ENCODE measurements at regions of chr1 and their contacts with region 1.

Region 1: DNA sequence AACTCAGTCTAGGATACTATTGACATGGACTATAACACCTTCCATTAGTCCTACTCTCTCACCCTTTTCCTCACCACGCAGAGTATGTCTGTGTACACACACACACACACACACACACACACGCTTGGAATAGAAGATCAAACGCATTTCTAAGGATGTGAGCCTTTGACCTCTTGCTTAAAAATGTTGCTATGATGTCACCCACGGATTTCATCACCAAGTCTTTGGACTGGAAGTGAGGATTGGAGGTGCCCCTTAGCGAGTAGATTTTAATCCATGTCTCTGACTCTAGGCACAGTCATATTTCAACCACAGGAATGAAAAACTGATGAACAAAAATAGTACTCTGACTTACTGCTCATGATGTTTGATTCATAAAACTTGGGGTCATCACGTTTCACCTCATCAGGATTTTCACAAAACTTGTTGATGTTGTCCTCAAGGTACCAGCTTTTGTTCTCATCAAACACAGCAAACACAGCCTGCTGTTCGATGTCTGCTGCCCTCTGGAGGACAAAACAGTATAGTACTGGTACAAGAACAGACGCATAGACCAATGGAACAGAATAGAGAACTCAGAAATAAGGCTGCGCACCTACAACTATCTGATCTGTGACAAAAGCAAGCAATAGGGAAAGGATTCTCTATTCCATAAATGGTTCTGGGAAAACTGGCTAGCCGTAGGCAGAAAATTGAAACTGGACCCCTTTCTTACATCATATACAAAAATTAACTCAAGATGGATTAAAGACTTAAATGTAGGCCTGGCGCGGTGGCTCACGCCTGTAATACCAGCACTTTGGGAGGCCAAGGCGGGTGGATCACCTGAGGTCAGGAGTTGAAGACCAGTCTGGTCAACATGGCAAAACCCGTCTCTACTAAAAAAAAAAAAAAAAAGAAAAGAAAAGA is 39.9 kb downstream of the F5 start:
- DNase-seq: peak; percentile 77
- ATAC-seq: peak; percentile 93
- H3K4me3 Mint-ChIP-seq: no peak overlapping the region
- H3K27ac Mint-ChIP-seq: no peak overlapping the region
- H3K4me1 Mint-ChIP-seq: no peaks in the 10 kb centered on the region
- H3K27me3 Mint-ChIP-seq: no peaks in the 10 kb centered on the region

Region 2: DNA sequence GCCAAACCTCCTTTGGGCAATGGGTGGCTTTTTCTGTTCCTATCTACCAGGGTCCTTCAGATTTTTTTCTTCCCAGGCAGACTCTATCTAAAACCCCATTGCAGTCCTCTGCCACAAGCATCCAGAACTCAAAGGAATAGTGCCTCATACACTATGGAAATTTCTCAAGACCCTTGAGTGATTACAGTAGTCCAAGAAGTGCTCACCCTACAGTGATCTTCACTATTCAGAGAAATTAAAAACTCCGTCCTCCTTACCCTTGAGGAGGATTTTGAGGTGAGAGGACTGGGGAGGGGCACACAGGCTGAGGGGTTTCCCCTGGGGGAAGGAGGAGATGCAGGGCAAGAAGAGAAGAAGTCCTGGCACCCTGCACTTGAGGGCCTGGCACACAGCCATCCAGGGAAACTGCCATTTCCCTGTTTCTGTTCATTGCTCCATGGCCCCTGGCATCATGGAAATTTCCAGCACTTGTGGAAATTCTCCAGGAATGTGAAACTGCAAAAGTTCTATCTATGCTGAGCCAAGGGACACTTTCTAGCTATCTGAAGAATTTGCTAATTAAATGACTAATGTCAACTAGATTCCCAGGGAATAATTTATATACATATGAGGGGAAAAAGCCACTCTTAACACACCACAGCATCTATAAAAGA is 542.4 kb before region 1 on chr1:
- CTCF ChIA-PET with region 1: no interaction called
- POLR2A ChIA-PET with region 1: no interaction called
- DNase-seq: no peak
- ATAC-seq: no peak
- H3K4me3 Mint-ChIP-seq: no peak overlapping the region
- H3K27ac Mint-ChIP-seq: no peak overlapping the region
- H3K4me1 Mint-ChIP-seq: no peaks in the 10 kb centered on the region
- H3K27me3 Mint-ChIP-seq: peaks cover 3% of the 10 kb centered on the region

Region 3: GRCh38 chr1:169466259-169467230 is 79.8 kb before region 1 on chr1:
- CTCF ChIA-PET with region 1: interaction called, 15 read pairs
- POLR2A ChIA-PET with region 1: no interaction called
- DNase-seq: peak; percentile 48
- ATAC-seq: no peak
- H3K4me3 Mint-ChIP-seq: no peak overlapping the region
- H3K27ac Mint-ChIP-seq: no peak overlapping the region
- H3K4me1 Mint-ChIP-seq: peaks cover 3% of the 10 kb centered on the region
- H3K27me3 Mint-ChIP-seq: no peaks in the 10 kb centered on the region

Region 4: DNA sequence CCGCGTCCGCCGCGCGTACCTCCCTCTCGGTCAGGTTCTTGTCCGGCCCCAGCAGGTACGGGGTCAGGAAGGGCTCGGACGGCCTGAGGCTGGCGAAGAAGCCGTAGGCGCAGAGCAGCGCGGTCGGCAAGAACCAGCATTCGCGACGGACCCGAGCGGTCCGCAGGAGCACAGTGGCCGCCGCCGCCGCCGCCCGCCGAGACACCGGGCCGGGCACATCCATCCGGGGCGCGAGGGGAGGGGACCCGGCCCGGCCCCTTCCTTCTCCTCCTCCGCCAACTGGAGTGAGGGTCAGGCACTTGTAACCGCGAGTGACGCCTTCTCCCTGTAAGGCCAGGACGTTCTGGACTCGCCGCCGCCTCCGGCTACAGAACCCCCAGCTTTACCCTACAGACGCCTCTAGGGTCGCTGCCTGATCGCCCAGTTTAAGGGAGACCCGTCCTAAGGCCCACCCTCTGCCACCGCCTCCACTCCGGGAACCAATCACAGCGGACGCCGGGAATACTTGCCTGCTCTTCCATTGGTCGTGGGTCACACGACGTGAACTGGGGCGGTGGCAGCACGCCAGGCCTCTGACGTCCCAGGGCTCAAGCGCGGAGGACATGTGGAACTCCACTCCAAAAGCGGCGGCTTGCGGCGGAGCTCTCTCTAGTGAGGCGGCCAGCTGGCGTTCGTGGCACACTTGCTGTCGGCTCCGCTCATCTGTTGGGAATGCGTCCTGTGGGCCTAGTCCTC is 60.6 kb before region 1 on chr1 and contains the start of gene SLC19A2:
- CTCF ChIA-PET with region 1: interaction called, 10 read pairs
- POLR2A ChIA-PET with region 1: no interaction called
- DNase-seq: peak; percentile 96
- ATAC-seq: peak; percentile 99
- H3K4me3 Mint-ChIP-seq: peak within 1 kb of the TSS; percentile 82
- H3K27ac Mint-ChIP-seq: peak within 1 kb of the TSS; percentile 89
- H3K4me1 Mint-ChIP-seq: peaks cover 38% of the 10 kb centered on the region
- H3K27me3 Mint-ChIP-seq: no peaks in the 10 kb centered on the region
- total RNA-seq, gene SLC19A2: 4.8 to 5.8 TPM

Region 5: DNA sequence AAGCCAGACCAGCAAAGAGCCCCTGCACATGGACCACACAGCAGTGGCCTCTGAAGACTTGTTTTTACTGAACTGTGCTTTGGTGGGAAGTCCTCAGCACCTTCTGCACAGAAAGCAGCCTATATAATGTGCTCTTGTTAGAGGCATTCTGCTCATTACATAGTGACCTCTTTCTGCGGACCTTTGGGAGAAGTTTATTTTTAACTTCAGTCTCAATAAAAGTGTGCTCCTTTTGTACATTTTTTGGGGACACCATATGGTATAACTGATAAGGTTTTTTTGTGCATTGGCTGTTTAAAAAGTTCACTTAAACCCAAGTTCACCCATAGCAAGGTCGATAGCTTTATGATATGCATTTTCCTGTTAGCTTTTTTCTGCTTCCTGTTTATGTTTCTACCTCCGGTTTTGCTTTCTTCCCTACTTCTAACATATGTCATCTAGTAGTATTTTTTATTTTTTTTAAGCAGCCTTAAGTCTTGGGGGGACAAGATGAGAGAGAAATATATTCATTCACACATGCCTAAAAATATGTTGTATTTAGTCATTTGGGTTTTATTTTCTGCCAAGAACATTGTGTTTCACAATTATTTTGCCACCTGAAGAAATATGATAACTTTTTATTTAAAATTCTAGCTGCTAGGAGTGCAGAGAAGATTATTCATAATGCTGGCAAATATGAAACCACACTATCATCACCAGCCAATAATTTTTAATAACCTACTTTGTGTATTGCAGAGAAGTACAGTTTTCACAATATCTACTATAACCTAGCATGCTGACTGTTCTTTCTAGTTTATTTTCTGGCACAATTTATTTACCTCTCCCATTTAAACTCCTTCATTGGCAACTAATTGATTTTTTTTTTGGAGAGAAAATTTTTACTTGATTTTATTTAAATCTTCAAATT is 37.7 kb before region 1 on chr1:
- CTCF ChIA-PET with region 1: interaction called, 11 read pairs
- POLR2A ChIA-PET with region 1: no interaction called
- DNase-seq: no peak
- ATAC-seq: peak; percentile 39
- H3K4me3 Mint-ChIP-seq: peak overlapping the region; percentile 35
- H3K27ac Mint-ChIP-seq: peak overlapping the region; percentile 75
- H3K4me1 Mint-ChIP-seq: peaks cover 11% of the 10 kb centered on the region
- H3K27me3 Mint-ChIP-seq: peaks cover 2% of the 10 kb centered on the region

Region 6: DNA sequence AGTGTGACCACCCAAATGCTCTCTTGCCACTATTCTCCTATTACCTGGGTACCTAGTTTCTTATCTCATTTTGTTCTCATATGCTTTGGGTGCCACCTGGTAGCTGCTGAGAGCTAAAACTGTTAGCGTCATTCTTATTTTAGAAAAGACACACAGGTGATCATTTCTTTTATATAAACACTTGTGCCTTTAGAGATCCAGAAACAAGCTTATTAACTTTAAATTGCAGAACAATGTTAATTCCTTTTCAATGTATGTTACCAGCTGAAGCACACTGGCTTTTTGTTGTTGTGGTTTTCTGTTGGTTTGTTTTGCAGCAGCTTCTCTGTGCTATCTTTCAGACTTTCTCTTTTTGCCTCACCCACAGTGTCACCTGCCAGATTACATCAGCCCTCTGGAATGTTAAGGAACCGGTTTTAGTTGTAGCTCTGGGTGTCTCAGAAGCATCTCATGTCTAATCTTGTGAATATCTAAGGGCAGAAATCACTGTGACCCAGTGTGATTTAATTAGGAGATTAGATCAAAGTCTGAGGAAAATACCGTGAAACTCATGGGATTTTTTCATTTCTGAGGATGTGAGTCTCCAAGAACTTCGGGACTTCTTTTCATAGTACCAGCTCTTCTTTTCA is 17.2 kb before region 1 on chr1:
- CTCF ChIA-PET with region 1: interaction called, 13 read pairs
- POLR2A ChIA-PET with region 1: no interaction called
- DNase-seq: no peak
- ATAC-seq: peak; percentile 39
- H3K4me3 Mint-ChIP-seq: peak overlapping the region; percentile 50
- H3K27ac Mint-ChIP-seq: peak overlapping the region; percentile 48
- H3K4me1 Mint-ChIP-seq: peaks cover 14% of the 10 kb centered on the region
- H3K27me3 Mint-ChIP-seq: no peaks in the 10 kb centered on the region

Region 7: GRCh38 chr1:169565335-169566271 is 19.3 kb after region 1 on chr1:
- CTCF ChIA-PET with region 1: interaction called, 14 read pairs
- POLR2A ChIA-PET with region 1: no interaction called
- DNase-seq: no peak
- ATAC-seq: no peak
- H3K4me3 Mint-ChIP-seq: no peak overlapping the region
- H3K27ac Mint-ChIP-seq: no peak overlapping the region
- H3K4me1 Mint-ChIP-seq: peaks cover 5% of the 10 kb centered on the region
- H3K27me3 Mint-ChIP-seq: no peaks in the 10 kb centered on the region

Region 8: DNA sequence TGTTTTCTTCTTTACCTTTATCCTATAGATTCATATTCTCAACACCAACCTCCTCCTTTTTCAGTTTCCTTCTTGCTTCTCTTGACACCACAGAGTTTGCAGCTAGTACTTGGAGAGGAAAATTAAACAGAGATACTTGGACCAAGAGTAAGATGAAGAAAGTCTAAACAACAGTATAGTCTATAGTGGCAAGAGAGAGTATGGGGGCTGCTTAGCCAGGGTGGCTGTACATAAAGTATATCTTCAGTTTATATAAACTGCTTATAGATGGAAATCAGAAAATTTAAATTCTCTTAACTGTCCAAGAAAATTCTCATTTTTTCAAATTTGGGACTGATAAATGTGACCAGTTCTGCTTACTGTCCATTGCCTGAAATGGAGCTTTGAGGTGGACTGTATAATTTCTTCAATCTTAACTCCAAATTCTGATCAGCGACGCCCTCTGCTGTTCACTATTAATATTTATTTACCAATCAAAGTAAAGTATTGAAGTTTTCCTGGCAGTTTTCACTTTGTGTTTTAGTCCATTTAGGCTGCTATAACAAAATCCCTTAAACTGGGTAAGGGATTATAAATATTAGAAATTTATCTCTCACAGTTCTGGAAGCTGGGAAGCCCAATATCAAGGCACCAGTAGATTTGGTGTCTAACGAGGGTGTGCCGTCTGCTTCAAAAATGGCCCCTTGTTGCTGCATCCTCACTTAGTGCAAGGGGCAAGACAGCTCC is 263.2 kb after region 1 on chr1:
- CTCF ChIA-PET with region 1: interaction called, 20 read pairs
- POLR2A ChIA-PET with region 1: no interaction called
- DNase-seq: peak; percentile 28
- ATAC-seq: no peak
- H3K4me3 Mint-ChIP-seq: no peak overlapping the region
- H3K27ac Mint-ChIP-seq: no peak overlapping the region
- H3K4me1 Mint-ChIP-seq: peaks cover 8% of the 10 kb centered on the region
- H3K27me3 Mint-ChIP-seq: no peaks in the 10 kb centered on the region